ENCODE measurements at regions of chr3 and their contacts with region 1.

Region 1: GRCh38 chr3:107927361-107928083 is 163.3 kb downstream of the CD47 start:
- DNase-seq: peak; percentile 37 to 83 (median 66)
- ATAC-seq: peak; percentile 90
- H3K4me3 ChIP-seq: peak overlapping the region; percentile 63
- H3K4me3 Mint-ChIP-seq: peak overlapping the region; percentile 89
- H3K27ac ChIP-seq: no peak overlapping the region
- H3K27ac Mint-ChIP-seq: peak overlapping the region; percentile 33
- H3K4me1 ChIP-seq: peaks cover 11% of the 10 kb centered on the region
- H3K4me1 Mint-ChIP-seq: peaks cover 12% of the 10 kb centered on the region
- H3K27me3 ChIP-seq: peaks cover 0 to 3% of the 10 kb centered on the region in 2 experiments
- H3K27me3 Mint-ChIP-seq: peaks cover 4% of the 10 kb centered on the region
- CTCF ChIP-seq: peak; percentile 97

Region 2: DNA sequence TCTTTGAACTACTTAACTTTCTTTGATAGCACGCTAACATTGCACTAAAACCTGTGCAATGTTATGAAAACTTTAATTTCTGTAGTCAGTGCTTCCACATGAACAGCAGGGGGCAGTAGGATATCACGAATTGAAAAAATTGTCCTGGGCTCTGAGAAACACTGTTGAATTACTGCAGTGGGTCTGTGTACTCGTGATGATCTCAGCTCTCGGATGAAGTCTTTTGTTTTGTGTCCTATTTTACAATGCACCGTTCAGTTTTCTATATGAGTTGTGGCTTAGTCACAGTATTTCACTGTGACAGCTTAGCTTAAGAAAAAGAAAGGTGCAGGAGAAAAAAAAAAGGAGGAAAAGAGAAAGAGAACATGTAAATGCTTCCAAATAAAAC is 691.6 kb before region 1 on chr3:
- CTCF ChIA-PET with region 1: interaction called, 20 read pairs
- POLR2A ChIA-PET with region 1: interaction called, 4 read pairs
- intact Hi-C with region 1: loop called (anchors 1 to 2 kb)
- DNase-seq: peak; percentile 6 to 82 (median 41)
- ATAC-seq: peak; percentile 69
- H3K4me3 ChIP-seq: peak overlapping the region in 1 of 2 experiments; percentile 20
- H3K4me3 Mint-ChIP-seq: peak overlapping the region; percentile 65
- H3K27ac ChIP-seq: no peak overlapping the region
- H3K27ac Mint-ChIP-seq: no peak overlapping the region
- H3K4me1 ChIP-seq: peaks cover 4% of the 10 kb centered on the region
- H3K4me1 Mint-ChIP-seq: peaks cover 17% of the 10 kb centered on the region
- H3K27me3 ChIP-seq: no peaks in the 10 kb centered on the region
- H3K27me3 Mint-ChIP-seq: peaks cover 6% of the 10 kb centered on the region
- CTCF ChIP-seq: peak; percentile 98

Region 3: DNA sequence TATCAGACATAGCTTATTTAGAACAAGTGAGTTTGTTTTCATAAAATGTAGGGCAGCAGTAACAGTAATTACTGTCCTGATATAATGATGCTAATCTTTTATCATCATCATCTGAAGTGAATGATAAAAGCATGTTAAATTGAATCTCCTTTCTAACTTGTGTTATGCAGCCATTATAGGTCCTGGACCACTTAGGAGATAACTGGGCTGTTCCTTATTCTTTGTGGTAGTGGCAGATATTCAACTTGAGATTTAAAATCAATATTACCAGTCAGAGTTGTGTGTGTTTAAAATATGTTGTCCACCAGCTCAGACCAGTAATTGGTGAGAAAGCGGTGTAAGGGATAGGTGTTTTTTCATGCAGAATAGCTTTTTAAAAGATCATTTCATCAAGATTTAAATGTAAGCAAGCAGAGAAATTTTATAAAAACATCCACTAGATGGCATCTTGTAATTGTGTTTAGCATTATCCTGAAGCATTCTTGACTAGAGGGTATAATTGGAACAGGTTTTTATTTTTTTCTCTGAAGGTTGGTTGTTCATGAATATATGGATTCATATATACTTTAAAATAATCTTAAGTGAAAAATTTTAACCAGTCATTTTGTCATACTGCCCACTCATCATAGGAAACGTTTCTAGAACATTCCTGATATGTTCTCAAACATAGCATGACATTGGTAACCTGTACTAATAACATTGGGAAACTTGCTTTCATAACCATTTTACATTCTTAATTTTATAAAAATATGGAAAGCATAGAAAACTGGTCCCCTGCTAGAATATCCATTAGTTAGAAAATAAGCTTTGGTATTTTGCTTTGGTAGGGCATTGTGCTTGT is 250.8 kb before region 1 on chr3:
- CTCF ChIA-PET with region 1: interaction called, 30 read pairs
- POLR2A ChIA-PET with region 1: no interaction called
- intact Hi-C with region 1: loop called in 1 of 2 experiments (anchors 1 kb)
- DNase-seq: peak in 2 of 9 experiments; percentile 24 to 49
- ATAC-seq: peak; percentile 54
- H3K4me3 ChIP-seq: no peak overlapping the region
- H3K4me3 Mint-ChIP-seq: no peak overlapping the region
- H3K27ac ChIP-seq: no peak overlapping the region
- H3K27ac Mint-ChIP-seq: peak overlapping the region; percentile 58
- H3K4me1 ChIP-seq: no peaks in the 10 kb centered on the region
- H3K4me1 Mint-ChIP-seq: peaks cover 41% of the 10 kb centered on the region
- H3K27me3 ChIP-seq: no peaks in the 10 kb centered on the region
- H3K27me3 Mint-ChIP-seq: no peaks in the 10 kb centered on the region
- CTCF ChIP-seq: peak; percentile 74

Region 4: DNA sequence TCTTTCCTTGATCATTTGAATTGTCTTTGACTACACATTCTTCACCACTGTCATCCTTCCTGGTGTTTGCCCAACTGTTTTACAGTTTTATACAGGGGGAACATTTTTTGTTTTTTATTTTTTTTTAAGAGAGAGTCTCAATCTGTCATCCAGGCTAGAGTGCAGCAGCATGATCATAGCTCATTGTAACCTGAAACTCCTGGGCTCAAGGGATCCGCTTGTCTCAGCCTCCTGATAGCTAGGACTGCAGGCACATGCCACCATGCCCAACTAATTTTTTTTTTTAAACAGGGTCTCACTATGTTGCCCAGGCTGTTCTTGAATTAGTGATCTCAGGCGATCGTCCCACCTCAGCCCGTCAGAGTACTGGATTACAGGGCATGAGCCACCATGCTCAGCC is 182.2 kb before region 1 on chr3:
- CTCF ChIA-PET with region 1: no interaction called
- POLR2A ChIA-PET with region 1: no interaction called
- intact Hi-C with region 1: no loop called
- DNase-seq: no peak
- ATAC-seq: no peak
- H3K4me3 ChIP-seq: no peak overlapping the region
- H3K4me3 Mint-ChIP-seq: no peak overlapping the region
- H3K27ac ChIP-seq: no peak overlapping the region
- H3K27ac Mint-ChIP-seq: no peak overlapping the region
- H3K4me1 ChIP-seq: no peaks in the 10 kb centered on the region
- H3K4me1 Mint-ChIP-seq: no peaks in the 10 kb centered on the region
- H3K27me3 ChIP-seq: no peaks in the 10 kb centered on the region
- H3K27me3 Mint-ChIP-seq: no peaks in the 10 kb centered on the region
- CTCF ChIP-seq: no peak

Region 5: GRCh38 chr3:107943786-107944523 is 16.4 kb after region 1 on chr3:
- CTCF ChIA-PET with region 1: interaction called, 25 read pairs
- POLR2A ChIA-PET with region 1: interaction called, 3 read pairs
- intact Hi-C with region 1: no loop called
- DNase-seq: peak in 1 of 9 experiments; percentile 9
- ATAC-seq: no peak
- H3K4me3 ChIP-seq: no peak overlapping the region
- H3K4me3 Mint-ChIP-seq: no peak overlapping the region
- H3K27ac ChIP-seq: no peak overlapping the region
- H3K27ac Mint-ChIP-seq: no peak overlapping the region
- H3K4me1 ChIP-seq: no peaks in the 10 kb centered on the region
- H3K4me1 Mint-ChIP-seq: peaks cover 11% of the 10 kb centered on the region
- H3K27me3 ChIP-seq: no peaks in the 10 kb centered on the region
- H3K27me3 Mint-ChIP-seq: no peaks in the 10 kb centered on the region
- CTCF ChIP-seq: no peak

Region 6: DNA sequence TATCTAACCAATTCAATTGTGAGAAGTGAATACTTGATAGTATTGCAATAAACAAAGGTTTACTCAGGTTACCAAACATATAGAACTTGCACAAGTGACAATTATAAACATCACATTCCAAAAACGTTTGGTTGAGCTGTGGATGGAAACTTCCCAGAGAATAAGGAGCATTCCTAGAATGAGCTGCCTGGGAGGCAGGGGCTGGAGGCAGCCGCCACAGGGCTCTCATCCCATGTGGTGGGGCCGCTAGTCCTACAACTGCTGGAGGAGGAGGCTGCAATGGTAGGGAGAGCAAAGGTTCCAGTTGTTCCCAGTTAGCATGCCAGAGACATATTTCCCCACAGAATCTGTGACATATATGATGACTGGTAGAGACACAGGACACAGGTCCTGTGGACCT is 113.0 kb after region 1 on chr3:
- CTCF ChIA-PET with region 1: interaction called, 3 read pairs
- POLR2A ChIA-PET with region 1: interaction called, 3 read pairs
- intact Hi-C with region 1: loop called in 1 of 2 experiments (anchors 10 kb)
- DNase-seq: no peak
- ATAC-seq: no peak
- H3K4me3 ChIP-seq: no peak overlapping the region
- H3K4me3 Mint-ChIP-seq: no peak overlapping the region
- H3K27ac ChIP-seq: no peak overlapping the region
- H3K27ac Mint-ChIP-seq: peak overlapping the region; percentile 55
- H3K4me1 ChIP-seq: peaks cover 8% of the 10 kb centered on the region
- H3K4me1 Mint-ChIP-seq: peaks cover 26% of the 10 kb centered on the region
- H3K27me3 ChIP-seq: no peaks in the 10 kb centered on the region
- H3K27me3 Mint-ChIP-seq: no peaks in the 10 kb centered on the region
- CTCF ChIP-seq: no peak

Region 7: DNA sequence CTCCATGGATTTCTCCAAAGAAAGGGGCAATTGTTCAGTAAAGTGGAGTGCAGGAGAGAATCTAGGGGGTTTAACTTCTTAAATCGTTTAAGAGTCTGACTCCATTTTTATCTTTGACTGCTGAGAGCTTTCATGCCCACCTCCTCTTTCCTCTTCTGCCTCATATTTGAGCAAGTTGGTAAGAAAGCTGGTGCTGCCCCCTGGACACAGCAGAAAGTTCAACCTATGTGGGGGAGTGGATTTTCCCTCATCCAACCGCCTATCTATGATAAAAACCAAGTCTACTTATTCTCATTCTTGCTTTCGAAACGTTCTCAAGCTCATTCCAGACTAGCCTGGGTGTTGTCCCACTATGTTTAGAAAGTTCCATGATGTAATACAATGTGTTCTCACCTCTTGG is 394.8 kb after region 1 on chr3:
- CTCF ChIA-PET with region 1: interaction called, 7 read pairs
- POLR2A ChIA-PET with region 1: no interaction called
- intact Hi-C with region 1: loop called (anchors 5 kb)
- DNase-seq: peak in 6 of 9 experiments; percentile 2 to 53 (median 32)
- ATAC-seq: no peak
- H3K4me3 ChIP-seq: no peak overlapping the region
- H3K4me3 Mint-ChIP-seq: no peak overlapping the region
- H3K27ac ChIP-seq: no peak overlapping the region
- H3K27ac Mint-ChIP-seq: no peak overlapping the region
- H3K4me1 ChIP-seq: no peaks in the 10 kb centered on the region
- H3K4me1 Mint-ChIP-seq: no peaks in the 10 kb centered on the region
- H3K27me3 ChIP-seq: no peaks in the 10 kb centered on the region
- H3K27me3 Mint-ChIP-seq: no peaks in the 10 kb centered on the region
- CTCF ChIP-seq: no peak

Region 8: DNA sequence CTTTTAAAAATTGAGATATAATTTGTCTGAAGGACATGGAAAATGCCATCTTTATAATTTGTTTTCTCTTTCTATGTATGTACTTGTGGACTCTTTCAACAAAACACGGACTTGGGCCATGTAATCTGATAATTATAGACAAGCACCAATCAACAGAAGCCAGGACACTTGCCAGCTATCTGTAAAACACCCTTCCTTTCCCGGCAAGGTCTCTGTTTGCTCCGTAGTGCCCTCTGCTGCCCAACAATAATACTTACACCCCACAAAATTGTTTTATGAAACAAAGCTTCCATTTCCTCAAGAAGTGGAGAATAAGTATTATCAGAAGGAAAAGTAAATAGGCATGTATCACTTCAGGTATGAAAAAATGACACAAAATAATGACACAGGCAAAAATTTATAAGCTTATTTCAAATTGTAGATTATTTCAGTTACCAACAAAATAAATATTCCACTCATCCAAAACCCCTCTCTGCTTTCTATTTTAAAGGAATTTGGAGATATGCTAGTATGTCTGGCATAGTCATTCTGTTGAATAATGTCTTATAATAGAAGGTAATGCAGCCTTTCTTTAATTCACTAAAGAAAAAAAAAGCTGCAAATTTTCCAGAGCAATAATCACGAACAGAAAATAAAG is 550.1 kb after region 1 on chr3:
- CTCF ChIA-PET with region 1: interaction called, 9 read pairs
- POLR2A ChIA-PET with region 1: interaction called, 4 read pairs
- intact Hi-C with region 1: loop called in 1 of 2 experiments (anchors 5 kb)
- DNase-seq: peak; percentile 10 to 72 (median 49)
- ATAC-seq: peak; percentile 90
- H3K4me3 ChIP-seq: no peak overlapping the region
- H3K4me3 Mint-ChIP-seq: no peak overlapping the region
- H3K27ac ChIP-seq: no peak overlapping the region
- H3K27ac Mint-ChIP-seq: no peak overlapping the region
- H3K4me1 ChIP-seq: no peaks in the 10 kb centered on the region
- H3K4me1 Mint-ChIP-seq: peaks cover 3% of the 10 kb centered on the region
- H3K27me3 ChIP-seq: no peaks in the 10 kb centered on the region
- H3K27me3 Mint-ChIP-seq: peaks cover 3% of the 10 kb centered on the region
- CTCF ChIP-seq: peak; percentile 82